ENCODE measurements at regions of chr14 and their contacts with region 1.

Region 1: DNA sequence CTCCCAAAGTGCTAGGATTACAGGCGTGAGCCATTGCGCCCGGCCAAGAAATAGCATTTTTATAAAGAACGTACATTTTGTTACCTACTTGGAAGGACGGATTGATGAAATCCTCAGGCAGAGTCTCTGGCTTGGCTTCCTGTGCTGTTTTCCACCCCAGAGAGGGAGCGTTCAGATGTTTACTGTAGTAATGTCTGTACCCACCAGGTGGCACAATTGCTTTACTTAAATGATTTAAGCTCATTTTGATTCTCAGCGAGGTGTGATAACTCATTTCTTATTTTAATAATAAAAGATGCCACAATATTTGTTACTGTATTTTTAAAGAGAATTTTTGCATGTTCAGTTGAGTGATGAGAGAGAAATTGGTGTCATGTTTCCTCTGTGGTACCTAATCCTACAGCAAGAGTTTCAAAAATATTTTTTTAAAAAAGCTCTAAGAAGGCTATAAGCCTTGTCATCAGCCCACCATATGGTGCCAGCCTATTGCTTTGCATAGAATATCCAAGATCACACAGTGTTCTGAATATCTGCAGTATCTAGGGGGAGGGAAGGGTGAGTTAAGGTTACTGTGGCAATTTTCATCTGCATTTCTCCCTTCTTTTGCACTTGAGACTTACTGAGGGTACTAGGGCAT is 82.6 kb upstream of the TRAF3 start:
- DNase-seq: peak; percentile 56 to 64 (median 61)
- H3K4me3 ChIP-seq: no peak overlapping the region
- H3K4me3 Mint-ChIP-seq: no peak overlapping the region
- H3K27ac ChIP-seq: no peak overlapping the region
- H3K27ac Mint-ChIP-seq: peak overlapping the region in 3 of 7 donors; percentile 8 to 76 (median 56)
- H3K4me1 ChIP-seq: peaks cover 12% of the 10 kb centered on the region
- H3K4me1 Mint-ChIP-seq: peaks cover 19 to 30% (median 22%) of the 10 kb centered on the region in 4 donors
- H3K27me3 ChIP-seq: no peaks in the 10 kb centered on the region
- H3K27me3 Mint-ChIP-seq: no peaks in the 10 kb centered on the region

Region 2: GRCh38 chr14:102644523-102644922 is 50.1 kb before region 1 on chr14:
- CTCF ChIA-PET with region 1: no interaction called
- POLR2A ChIA-PET with region 1: no interaction called
- intact Hi-C with region 1: no loop called
- DNase-seq: no peak
- H3K4me3 ChIP-seq: no peak overlapping the region
- H3K4me3 Mint-ChIP-seq: peak overlapping the region in 1 of 8 donors; percentile 5
- H3K27ac ChIP-seq: no peak overlapping the region
- H3K27ac Mint-ChIP-seq: peak overlapping the region in 4 of 7 donors; percentile 51 to 85 (median 65)
- H3K4me1 ChIP-seq: peaks cover 30% of the 10 kb centered on the region
- H3K4me1 Mint-ChIP-seq: peaks cover 39 to 71% (median 53%) of the 10 kb centered on the region in 4 donors
- H3K27me3 ChIP-seq: no peaks in the 10 kb centered on the region
- H3K27me3 Mint-ChIP-seq: no peaks in the 10 kb centered on the region

Region 3: GRCh38 chr14:102655170-102655569 is 39.5 kb before region 1 on chr14:
- CTCF ChIA-PET with region 1: interaction called, 15 read pairs
- POLR2A ChIA-PET with region 1: no interaction called
- intact Hi-C with region 1: no loop called
- DNase-seq: no peak
- H3K4me3 ChIP-seq: no peak overlapping the region
- H3K4me3 Mint-ChIP-seq: no peak overlapping the region
- H3K27ac ChIP-seq: no peak overlapping the region
- H3K27ac Mint-ChIP-seq: peak overlapping the region in 1 of 7 donors; percentile 23
- H3K4me1 ChIP-seq: no peaks in the 10 kb centered on the region
- H3K4me1 Mint-ChIP-seq: peaks cover 13 to 41% (median 26%) of the 10 kb centered on the region in 4 donors
- H3K27me3 ChIP-seq: no peaks in the 10 kb centered on the region
- H3K27me3 Mint-ChIP-seq: no peaks in the 10 kb centered on the region

Region 4: DNA sequence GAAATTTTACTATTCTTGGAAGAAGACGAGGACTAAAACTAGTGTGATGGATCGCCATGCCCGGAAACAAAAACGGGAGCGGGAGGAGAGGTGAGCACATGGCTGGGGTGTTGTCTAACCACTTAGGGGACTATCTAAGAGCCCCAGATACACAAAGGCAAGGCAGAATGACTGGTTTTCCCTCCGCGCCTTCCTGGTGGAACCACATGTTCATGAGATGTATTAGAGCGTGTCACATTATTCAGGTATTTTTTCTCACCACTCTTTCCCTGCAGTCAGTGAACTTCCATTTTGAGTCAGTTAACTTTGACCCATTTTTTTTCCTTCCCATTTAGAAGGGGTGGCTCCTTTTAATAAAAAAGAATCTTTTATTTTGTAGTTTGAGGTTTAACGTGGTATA is 13.8 kb after region 1 on chr14:
- CTCF ChIA-PET with region 1: interaction called, 34 read pairs
- POLR2A ChIA-PET with region 1: no interaction called
- intact Hi-C with region 1: no loop called
- DNase-seq: no peak
- H3K4me3 ChIP-seq: no peak overlapping the region
- H3K4me3 Mint-ChIP-seq: no peak overlapping the region
- H3K27ac ChIP-seq: no peak overlapping the region
- H3K27ac Mint-ChIP-seq: peak overlapping the region in 3 of 7 donors; percentile 6 to 63 (median 10)
- H3K4me1 ChIP-seq: no peaks in the 10 kb centered on the region
- H3K4me1 Mint-ChIP-seq: no peaks in the 10 kb centered on the region
- H3K27me3 ChIP-seq: no peaks in the 10 kb centered on the region
- H3K27me3 Mint-ChIP-seq: no peaks in the 10 kb centered on the region

Region 5: DNA sequence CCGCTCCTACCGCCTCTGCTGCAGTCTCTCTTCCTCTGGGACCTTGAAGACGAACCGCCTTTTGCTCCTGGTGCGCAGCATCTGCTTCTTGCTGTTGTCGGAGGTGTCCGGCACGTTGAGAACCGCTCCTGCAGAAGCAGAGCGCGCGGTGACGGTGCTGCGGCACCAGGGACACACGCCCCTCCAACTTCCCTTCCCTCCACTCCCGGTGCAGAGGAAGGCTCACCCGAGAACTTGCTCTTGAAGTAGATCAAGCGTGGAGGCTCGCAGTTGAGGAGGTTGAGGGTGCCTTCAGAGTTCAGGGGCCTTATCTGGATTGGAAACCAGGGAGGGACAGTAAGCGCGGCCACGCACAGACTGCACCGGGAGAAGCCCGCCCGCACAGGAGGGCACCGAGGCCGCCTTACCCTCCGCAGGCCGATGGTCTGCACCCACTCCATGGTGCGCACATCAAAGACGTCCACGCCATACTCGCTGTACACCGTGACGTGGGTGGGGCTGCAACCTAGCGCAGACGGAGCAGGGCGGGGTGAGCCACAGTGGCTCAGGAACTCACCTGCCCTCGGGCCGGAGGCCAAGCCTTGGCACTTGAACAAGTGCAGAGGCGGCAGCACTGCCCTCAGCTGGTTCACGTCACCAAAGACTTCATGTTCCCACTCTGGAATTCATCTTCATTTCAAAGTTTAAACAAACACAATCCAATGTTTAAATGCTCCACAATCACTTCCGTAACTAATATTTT is 245.3 kb after region 1 on chr14:
- CTCF ChIA-PET with region 1: no interaction called
- POLR2A ChIA-PET with region 1: no interaction called
- intact Hi-C with region 1: no loop called
- DNase-seq: no peak
- H3K4me3 ChIP-seq: no peak overlapping the region
- H3K4me3 Mint-ChIP-seq: no peak overlapping the region
- H3K27ac ChIP-seq: no peak overlapping the region
- H3K27ac Mint-ChIP-seq: no peak overlapping the region
- H3K4me1 ChIP-seq: no peaks in the 10 kb centered on the region
- H3K4me1 Mint-ChIP-seq: no peaks in the 10 kb centered on the region
- H3K27me3 ChIP-seq: no peaks in the 10 kb centered on the region
- H3K27me3 Mint-ChIP-seq: no peaks in the 10 kb centered on the region

Region 6: GRCh38 chr14:103091041-103091882 is 396.6 kb after region 1 on chr14:
- CTCF ChIA-PET with region 1: interaction called, 14 read pairs
- POLR2A ChIA-PET with region 1: no interaction called
- intact Hi-C with region 1: loop called (anchors 1 kb)
- DNase-seq: peak; percentile 56 to 78 (median 66)
- H3K4me3 ChIP-seq: peak overlapping the region in 1 of 2 donors; percentile 45
- H3K4me3 Mint-ChIP-seq: peak overlapping the region; percentile 5 to 74 (median 54)
- H3K27ac ChIP-seq: no peak overlapping the region
- H3K27ac Mint-ChIP-seq: peak overlapping the region in 1 of 7 donors; percentile 27
- H3K4me1 ChIP-seq: peaks cover 10% of the 10 kb centered on the region
- H3K4me1 Mint-ChIP-seq: peaks cover 0 to 4% (median 0%) of the 10 kb centered on the region in 4 donors
- H3K27me3 ChIP-seq: no peaks in the 10 kb centered on the region
- H3K27me3 Mint-ChIP-seq: peaks cover 3 to 7% of the 10 kb centered on the region in 2 donors

Region 7: DNA sequence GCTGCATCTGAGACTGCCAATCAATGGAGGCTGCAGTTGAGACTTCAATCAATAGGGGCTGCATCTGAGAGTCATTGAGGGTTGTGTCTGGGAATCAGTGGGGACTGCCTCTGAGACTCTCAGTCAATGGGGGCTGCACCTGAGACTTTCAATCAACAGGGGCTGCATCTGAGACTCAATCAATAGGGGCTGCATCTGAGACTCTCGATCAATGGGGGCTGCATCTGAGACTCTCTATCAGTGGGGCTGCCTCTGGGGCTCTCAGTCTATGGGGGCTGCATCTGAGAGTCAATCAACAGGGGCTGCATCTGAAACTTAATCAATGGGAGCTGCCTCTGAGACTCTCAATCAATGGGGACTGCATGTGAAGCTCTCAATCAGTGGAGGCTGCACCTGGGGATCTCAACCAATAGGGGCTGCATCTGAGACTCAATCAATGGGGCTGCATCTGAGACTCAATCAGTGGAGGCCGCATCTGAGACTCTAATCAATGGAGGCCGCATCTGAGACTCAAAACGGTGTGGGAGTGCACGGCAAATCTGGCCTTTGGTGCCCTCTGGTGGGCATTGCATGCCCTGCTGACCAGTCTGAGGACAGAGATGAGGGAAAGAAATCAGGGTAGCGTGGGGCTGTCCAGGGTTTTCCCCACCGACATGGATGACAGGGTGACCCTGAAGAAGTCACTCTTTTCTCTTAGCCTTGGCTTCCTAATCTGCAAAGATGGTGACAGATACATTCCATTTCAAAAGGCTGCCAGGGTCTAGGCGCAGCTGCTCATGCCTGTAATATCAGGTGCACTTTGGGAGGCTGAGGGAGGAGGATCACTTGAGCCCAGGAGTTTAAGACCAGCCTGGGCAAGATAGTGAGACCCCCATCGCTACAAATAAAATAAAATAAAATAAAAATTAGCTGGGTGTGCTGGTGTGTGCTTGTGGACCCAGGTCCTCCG is 598.1 kb after region 1 on chr14:
- CTCF ChIA-PET with region 1: interaction called, 6 read pairs
- POLR2A ChIA-PET with region 1: no interaction called
- intact Hi-C with region 1: loop called (anchors 2 kb)
- DNase-seq: peak; percentile 56 to 65 (median 57)
- H3K4me3 ChIP-seq: no peak overlapping the region
- H3K4me3 Mint-ChIP-seq: no peak overlapping the region
- H3K27ac ChIP-seq: no peak overlapping the region
- H3K27ac Mint-ChIP-seq: peak overlapping the region in 1 of 7 donors; percentile 13
- H3K4me1 ChIP-seq: no peaks in the 10 kb centered on the region
- H3K4me1 Mint-ChIP-seq: peaks cover 0 to 4% (median 1%) of the 10 kb centered on the region in 4 donors
- H3K27me3 ChIP-seq: no peaks in the 10 kb centered on the region
- H3K27me3 Mint-ChIP-seq: peaks cover 8 to 26% of the 10 kb centered on the region in 2 donors